PC-3 (cell line): ENCODE measurements at regions of chr14 and their contacts with region 1.

Region 1: DNA sequence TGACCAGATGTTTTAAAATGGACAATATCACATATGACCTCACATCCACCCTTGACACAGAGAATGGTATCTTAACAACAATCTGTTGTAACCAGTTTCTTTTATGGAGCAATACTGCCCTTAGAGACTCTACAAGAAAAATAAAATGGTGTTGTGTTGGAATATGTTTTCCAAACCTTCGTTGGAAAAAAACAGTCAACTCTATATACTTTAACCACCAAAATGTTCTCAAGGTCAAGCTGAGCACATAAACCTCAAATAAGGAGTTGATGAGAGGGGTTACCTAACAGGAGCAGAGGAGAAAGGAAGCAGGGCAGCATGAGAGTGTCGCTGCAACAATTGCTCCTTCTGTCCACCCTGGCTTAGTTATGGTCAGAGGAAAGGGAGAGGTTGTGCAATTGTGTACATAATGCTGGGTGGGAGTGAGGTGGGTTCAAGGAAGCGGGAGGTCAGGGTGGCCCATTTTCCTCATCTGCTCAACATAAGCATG is 179.2 kb upstream of the BMP4 start:
- DNase-seq: no peak
- ATAC-seq: no peak
- H3K4me3 ChIP-seq: no peak overlapping the region
- H3K27ac ChIP-seq: no peak overlapping the region
- H3K4me1 ChIP-seq: peaks cover 23% of the 10 kb centered on the region
- H3K27me3 ChIP-seq: no peaks in the 10 kb centered on the region
- CTCF ChIP-seq: no peak

Region 2: GRCh38 chr14:54085232-54085761 is 50.5 kb before region 1 on chr14:
- CTCF ChIA-PET with region 1: no interaction called
- POLR2A ChIA-PET with region 1: no interaction called
- intact Hi-C with region 1: loop called (anchors 2 kb)
- DNase-seq: no peak
- ATAC-seq: no peak
- H3K4me3 ChIP-seq: no peak overlapping the region
- H3K27ac ChIP-seq: no peak overlapping the region
- H3K4me1 ChIP-seq: no peaks in the 10 kb centered on the region
- H3K27me3 ChIP-seq: no peaks in the 10 kb centered on the region
- CTCF ChIP-seq: no peak